ENCODE measurements at regions of chrX and their contacts with region 1.

Region 1: DNA sequence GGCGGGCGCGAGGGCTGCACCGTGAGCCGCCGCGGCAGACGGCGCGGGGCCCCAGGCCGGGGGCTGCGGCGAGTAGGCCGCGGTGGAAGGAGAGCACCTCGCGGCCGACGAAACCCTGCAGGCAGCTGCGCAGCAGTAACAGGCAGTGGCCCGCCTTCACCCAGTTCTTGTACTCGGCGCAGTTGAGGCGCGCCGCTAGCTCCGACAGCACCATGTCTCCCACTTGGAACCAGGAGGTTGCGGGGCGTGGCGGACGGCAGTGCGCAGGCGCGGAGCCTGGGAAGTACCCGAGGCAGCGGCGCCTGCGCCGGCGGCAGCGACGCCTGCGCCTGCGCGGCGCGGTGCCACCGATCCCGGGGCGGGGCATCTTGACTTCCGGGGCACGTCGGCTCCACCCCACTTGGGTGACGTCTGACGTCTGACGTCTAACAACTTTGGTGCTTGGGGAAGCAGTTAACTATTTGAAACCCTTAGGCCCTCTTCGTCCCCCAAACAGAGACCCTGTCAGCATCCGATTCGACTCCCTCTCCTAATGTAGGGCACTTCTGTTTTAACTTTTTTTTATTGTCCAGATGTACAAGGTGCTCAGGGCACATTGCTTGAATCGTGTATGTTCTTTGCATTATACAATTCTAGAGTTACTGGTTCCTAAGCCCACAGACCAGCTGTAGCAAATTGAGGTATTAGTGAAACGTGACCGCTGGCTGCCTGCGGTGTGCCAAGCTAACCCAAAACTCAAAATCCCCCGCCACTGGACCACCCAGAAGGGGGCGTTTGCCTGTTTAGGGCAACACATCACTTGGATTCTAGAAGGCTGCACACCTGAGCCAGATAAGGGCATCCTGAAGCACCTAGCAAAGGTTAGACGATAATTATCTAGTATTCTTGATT is at the start of gene CXorf38:
- DNase-seq: peak; percentile 85
- H3K4me3 Mint-ChIP-seq: peak within 1 kb of the TSS; percentile 97
- H3K27ac Mint-ChIP-seq: peak within 1 kb of the TSS; percentile 94
- H3K4me1 Mint-ChIP-seq: peaks cover 28% of the 10 kb centered on the region
- H3K27me3 Mint-ChIP-seq: no peaks in the 10 kb centered on the region
- total RNA-seq, gene CXorf38: 15.7 and 16.9 TPM in 2 replicates

Region 2: DNA sequence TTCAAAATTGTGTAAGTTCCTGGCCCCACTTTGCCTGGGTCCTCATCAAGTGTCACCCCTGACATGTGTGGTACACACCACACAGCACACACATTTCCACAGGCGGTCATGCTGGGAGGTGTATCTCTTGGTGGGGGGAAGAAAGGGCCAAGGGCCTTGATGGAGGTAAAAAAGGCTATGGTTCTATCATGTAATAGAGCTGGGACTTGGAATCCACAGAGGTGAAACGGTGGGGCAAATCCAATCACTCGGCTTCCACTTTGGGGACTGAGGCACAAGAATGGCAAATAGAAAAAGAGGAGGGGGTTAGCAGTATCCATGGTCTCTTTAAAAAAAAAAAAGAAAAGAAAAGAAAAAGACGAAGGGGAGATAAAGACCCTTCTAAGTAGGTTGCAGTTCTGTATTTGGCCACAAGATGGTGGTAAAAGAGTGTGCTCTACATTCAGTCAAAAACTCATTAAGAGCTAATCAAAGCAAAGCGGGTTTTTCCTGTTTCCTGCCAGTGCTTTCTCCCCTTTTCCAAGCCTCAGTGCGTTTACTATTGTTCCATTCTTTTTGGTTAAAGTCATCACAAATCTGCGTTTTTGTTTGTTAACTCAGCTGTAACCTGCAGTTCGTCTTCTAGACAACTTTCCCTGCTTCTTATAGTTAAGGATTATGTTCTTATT is 103.8 kb before region 1 on chrX:
- intact Hi-C with region 1: loop called (anchors 1 kb)
- DNase-seq: no peak
- H3K4me3 Mint-ChIP-seq: no peak overlapping the region
- H3K27ac Mint-ChIP-seq: no peak overlapping the region
- H3K4me1 Mint-ChIP-seq: peaks cover 21% of the 10 kb centered on the region
- H3K27me3 Mint-ChIP-seq: peaks cover 6% of the 10 kb centered on the region

Region 3: GRCh38 chrX:40622479-40623138 is 24.9 kb before region 1 on chrX:
- intact Hi-C with region 1: no loop called
- DNase-seq: no peak
- H3K4me3 Mint-ChIP-seq: no peak overlapping the region
- H3K27ac Mint-ChIP-seq: no peak overlapping the region
- H3K4me1 Mint-ChIP-seq: no peaks in the 10 kb centered on the region
- H3K27me3 Mint-ChIP-seq: no peaks in the 10 kb centered on the region

Region 4: DNA sequence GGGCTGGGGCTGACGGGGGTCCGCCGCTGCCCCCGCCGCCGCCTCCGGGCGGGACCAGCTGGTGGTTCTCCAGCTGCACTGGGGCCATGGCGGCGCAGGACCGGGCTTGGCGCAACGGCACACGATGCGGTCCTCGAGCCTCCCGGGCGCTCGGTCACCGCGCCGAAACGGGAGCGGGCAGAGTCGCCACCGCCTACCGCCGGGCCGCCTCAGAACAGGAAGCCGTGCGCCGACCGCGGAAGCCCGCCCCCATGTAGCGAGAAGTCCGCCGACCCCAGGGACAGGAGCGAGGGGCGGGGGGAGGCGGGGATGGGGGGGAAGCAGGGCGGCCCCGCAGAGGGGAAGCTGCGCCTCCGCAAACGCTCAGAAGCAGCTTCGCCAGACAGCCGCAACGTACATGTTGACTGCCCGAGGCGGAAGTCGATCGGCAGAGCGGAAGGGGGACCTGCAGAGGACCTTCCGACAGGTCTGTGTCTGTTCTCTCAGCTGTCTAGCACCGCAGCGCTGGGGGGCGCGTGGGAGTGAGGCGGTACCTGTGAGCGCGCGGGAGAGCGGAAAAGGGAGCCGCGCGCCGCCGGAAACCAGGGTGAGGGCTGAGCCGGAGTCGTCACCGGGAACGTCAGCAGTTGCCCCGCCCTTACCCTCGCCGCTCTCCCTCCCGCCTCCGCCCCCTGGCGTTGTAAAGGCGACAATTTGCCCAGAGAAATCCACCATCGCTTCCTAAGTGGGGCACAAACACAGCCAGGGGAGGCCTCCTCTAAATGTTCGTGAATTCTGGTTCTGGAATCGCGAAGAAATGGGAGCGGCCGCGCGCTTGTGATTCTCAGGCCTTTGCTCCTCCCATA is 88.0 kb after region 1 on chrX and contains the start of gene MED14:
- intact Hi-C with region 1: loop called (anchors 1 kb)
- DNase-seq: peak; percentile 82
- H3K4me3 Mint-ChIP-seq: peak within 1 kb of the TSS; percentile 87
- H3K27ac Mint-ChIP-seq: peak within 1 kb of the TSS; percentile 90
- H3K4me1 Mint-ChIP-seq: peaks cover 30% of the 10 kb centered on the region
- H3K27me3 Mint-ChIP-seq: no peaks in the 10 kb centered on the region
- total RNA-seq, gene MED14: 36.4 and 40.9 TPM in 2 replicates

Region 5: GRCh38 chrX:40877887-40878286 is 230.3 kb after region 1 on chrX:
- intact Hi-C with region 1: loop called (anchors 5 kb)
- DNase-seq: no peak
- H3K4me3 Mint-ChIP-seq: no peak overlapping the region
- H3K27ac Mint-ChIP-seq: no peak overlapping the region
- H3K4me1 Mint-ChIP-seq: no peaks in the 10 kb centered on the region
- H3K27me3 Mint-ChIP-seq: peaks cover 2% of the 10 kb centered on the region

Region 6: DNA sequence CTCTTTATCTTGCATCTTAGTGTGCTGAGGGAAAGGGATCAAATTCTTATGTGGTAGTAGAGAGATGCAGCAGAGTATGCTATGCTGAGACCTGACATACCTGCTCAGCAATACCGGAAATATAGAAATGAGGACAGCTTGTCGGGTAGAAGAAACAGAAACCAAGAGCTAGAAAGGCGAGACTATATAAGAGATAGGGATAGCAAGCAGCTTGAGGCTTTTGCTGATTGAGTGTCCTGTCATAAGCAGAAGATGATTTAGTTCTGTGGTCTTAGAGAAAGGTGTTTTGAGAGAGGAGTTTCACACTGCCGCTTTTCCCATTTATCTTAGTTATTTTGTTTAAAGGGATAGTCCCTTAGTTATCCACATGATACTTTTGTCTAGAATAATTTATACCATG is 469.4 kb after region 1 on chrX:
- intact Hi-C with region 1: loop called (anchors 1 kb)
- DNase-seq: peak; percentile 11
- H3K4me3 Mint-ChIP-seq: peak overlapping the region; percentile 66
- H3K27ac Mint-ChIP-seq: peak overlapping the region; percentile 79
- H3K4me1 Mint-ChIP-seq: peaks cover 61% of the 10 kb centered on the region
- H3K27me3 Mint-ChIP-seq: no peaks in the 10 kb centered on the region

Measured in activated T-helper 1 cell treated with anti-CD3 and anti-CD28 coated beads, Interleukin-12 subunit alpha, Interleukin-12 subunit beta, Interleukin-2, Interleukin-4 antibody, amounts not matched to agents 30 ng/mL and 10 ng/mL and 1 ng/mL, durations not matched to agents 14 hours and 24 hours and 36 hours (primary cell).